ENCODE measurements at regions of chr3 and their contacts with region 1.

Region 1: GRCh38 chr3:70815817-70816216 is 503.4 kb upstream of the MDFIC2 start:
- DNase-seq: peak; percentile 89
- ATAC-seq: peak; percentile 98
- H3K4me3 ChIP-seq: no peak overlapping the region
- H3K27ac ChIP-seq: peak overlapping the region; percentile 31
- H3K4me1 ChIP-seq: peaks cover 32% of the 10 kb centered on the region
- H3K27me3 ChIP-seq: no peaks in the 10 kb centered on the region
- CTCF ChIP-seq: no peak

Region 2: DNA sequence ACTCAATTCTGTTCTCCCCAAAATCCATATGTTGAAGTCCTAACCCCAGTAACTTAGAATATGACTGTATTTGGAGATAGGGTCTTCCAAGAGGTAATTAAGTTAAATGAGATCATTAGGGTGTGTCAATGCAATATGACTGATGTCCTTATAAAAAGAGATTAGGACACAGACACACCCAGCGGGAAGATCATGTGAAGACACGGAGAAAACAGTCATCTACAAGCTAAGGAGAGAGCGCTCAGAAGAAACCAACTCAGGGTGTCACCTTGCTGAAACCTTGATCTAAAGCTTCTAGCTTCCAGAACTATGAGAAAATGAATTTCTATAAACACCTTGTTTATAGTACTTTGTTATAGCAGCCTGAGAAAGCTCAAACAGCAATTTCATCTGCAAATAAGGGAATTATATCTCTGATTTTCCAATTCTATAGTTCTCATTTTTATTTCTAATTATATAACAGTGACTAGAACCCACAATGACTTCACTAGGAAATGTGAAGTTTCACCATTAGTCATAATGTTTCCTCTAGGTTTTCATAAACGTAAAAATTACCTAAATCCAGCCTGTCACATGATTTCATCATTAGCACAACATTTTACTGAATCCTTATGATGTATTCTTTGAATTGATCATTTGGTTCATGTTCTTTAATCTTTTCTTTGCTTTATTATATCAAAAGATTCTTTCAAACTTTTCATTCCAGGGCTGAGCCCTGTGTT is 44.2 kb before region 1 on chr3:
- CTCF ChIA-PET with region 1: no interaction called
- POLR2A ChIA-PET with region 1: no interaction called
- intact Hi-C with region 1: loop called (anchors 5 kb)
- DNase-seq: peak; percentile 47
- ATAC-seq: peak; percentile 90
- H3K4me3 ChIP-seq: no peak overlapping the region
- H3K27ac ChIP-seq: peak overlapping the region; percentile 63
- H3K4me1 ChIP-seq: peaks cover 21% of the 10 kb centered on the region
- H3K27me3 ChIP-seq: no peaks in the 10 kb centered on the region
- CTCF ChIP-seq: no peak

Region 3: GRCh38 chr3:70861855-70862254 is 46.0 kb after region 1 on chr3:
- CTCF ChIA-PET with region 1: no interaction called
- POLR2A ChIA-PET with region 1: no interaction called
- intact Hi-C with region 1: no loop called
- DNase-seq: peak; percentile 33
- ATAC-seq: peak; percentile 27; the same call in 1 of the 2 replicates
- H3K4me3 ChIP-seq: no peak overlapping the region
- H3K27ac ChIP-seq: peak overlapping the region; percentile 46
- H3K4me1 ChIP-seq: peaks cover 23% of the 10 kb centered on the region
- H3K27me3 ChIP-seq: no peaks in the 10 kb centered on the region
- CTCF ChIP-seq: no peak

Region 4: DNA sequence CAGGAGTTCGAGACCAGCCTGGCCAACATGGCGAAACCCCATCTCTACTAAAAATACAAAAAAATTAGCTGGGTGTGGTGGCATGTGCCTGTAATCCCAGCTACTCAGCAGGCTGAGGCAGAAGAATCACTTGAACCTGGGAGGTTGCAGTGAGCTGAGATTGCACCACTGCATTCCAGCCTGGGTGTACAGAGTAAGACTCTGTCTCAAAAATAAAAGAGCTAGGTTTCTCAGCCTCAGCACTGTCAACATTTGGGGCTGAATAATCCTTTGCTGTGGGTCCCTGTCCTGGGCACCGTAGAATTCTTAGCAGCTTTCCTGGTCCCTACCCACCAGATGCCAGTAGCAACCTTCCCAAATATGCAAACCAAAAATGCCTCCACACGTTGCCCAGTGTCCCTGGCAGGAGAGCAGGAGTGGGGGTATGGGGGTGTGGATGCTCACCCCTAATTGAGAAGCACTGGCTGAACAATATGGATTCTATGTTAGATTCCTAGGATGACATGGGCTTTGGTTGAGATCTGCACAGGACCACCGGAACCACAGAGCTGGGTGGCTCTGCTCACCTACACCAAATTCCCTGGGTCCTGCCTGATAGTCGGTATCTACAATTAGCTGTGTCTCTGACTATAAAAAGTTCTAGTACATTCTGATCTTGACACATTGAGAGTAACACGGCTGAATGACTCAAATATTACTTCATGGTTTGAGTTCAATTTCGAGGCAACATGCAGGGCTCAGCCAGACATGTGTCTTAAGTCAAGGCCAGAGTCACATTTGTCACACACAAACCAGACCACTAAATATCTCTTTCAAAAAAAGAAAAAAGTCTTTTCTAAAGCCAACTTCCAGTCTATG is 73.6 kb after region 1 on chr3:
- CTCF ChIA-PET with region 1: no interaction called
- POLR2A ChIA-PET with region 1: no interaction called
- intact Hi-C with region 1: no loop called
- DNase-seq: no peak
- ATAC-seq: no peak
- H3K4me3 ChIP-seq: no peak overlapping the region
- H3K27ac ChIP-seq: no peak overlapping the region
- H3K4me1 ChIP-seq: no peaks in the 10 kb centered on the region
- H3K27me3 ChIP-seq: no peaks in the 10 kb centered on the region
- CTCF ChIP-seq: no peak

Measured in PC-3 (cell line).